ENCODE measurements at regions of chr6 and their contacts with region 1.

Region 1: DNA sequence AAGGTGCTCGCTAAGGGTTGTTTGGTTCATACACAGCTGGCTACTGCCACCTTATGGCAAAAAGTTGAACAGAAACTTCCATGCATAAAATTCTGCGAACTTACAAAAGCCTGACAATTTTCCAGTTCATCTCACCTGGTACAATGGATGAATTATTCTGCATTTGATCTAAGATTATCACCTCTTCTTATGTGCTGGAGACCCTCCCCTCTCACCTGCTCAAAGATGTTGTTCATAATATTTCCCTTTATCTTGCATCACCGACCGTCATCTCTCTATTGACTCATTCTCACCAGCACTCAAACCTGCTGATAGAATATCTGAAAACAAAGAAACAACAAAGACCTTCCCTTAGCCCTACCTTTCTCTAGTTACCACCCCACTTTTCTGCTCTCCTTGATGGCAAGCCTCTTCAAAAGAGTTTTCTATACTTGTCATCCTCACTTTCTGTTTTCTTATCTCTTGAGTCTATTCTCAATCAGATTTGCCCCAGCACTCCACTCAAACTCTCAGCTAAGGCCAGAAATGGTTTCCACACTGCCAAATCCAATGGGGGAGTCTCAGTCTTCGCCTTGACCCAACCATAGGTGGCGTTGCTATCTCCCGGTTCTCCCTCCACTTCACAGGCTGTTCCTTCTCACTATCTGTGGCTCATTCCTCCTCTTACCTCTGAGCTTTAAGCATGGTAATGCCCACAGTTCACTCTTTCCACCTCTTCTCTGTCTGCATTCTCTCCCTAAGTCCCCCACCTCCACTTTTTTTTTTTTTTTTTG is 25.8 kb downstream of the SNRNP48 start:
- DNase-seq: no peak
- ATAC-seq: peak; percentile 40 to 55
- H3K4me3 ChIP-seq: no peak overlapping the region
- H3K27ac ChIP-seq: no peak overlapping the region
- H3K4me1 ChIP-seq: no peaks in the 10 kb centered on the region
- H3K27me3 ChIP-seq: no peaks in the 10 kb centered on the region

Region 2: GRCh38 chr6:6676910-6677441 is 938.8 kb before region 1 on chr6:
- intact Hi-C with region 1: loop called in 1 of 4 experiments (anchors 10 kb)
- DNase-seq: peak; percentile 65 to 85 (median 76)
- ATAC-seq: peak; percentile 76 to 90
- H3K4me3 ChIP-seq: no peak overlapping the region
- H3K27ac ChIP-seq: peak overlapping the region; percentile 90
- H3K4me1 ChIP-seq: peaks cover 3% of the 10 kb centered on the region
- H3K27me3 ChIP-seq: no peaks in the 10 kb centered on the region

Region 3: DNA sequence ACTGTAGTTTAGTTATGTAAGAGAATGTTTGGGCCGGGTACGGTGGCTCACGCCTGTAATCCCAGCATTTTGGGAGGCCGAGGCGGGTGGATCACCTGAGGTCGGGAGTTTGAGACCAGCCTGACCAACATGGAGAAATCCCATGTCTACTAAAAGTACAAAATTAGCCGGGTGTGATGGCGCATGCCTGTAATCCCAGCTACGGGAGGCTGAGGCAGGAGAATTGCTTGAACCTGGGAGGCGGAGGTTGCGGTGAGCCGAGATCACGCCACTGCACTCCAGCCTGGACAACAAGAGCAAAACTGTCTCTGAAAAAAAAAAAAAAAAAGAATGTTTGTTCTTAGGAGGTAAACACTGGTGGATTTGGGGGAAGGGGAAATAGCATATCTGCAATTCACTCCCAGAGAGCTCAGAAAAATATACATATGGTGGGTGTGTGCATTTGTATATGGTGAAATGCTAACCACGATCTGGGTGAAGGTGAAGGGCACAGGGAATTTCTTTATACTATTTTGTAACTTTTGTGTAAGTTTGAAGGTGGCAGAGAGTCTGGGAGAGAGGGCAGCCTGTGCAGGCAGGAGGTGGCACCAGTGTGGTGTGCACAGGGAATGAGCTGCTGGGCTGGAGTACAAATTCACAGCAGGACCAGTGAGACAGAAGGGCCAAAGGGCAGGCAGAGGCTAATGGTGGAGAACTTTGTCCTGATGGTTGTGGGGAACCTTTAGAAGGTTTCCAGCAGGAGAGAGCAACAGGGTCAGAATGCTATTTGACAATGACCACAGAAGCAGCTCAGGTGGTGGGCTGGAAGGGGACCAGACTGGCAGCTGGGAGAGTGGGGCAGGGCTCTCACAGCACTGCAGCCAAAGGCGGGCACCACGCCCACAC is 345.2 kb before region 1 on chr6:
- intact Hi-C with region 1: loop called (anchors 5 to 10 kb)
- DNase-seq: no peak
- ATAC-seq: no peak
- H3K4me3 ChIP-seq: no peak overlapping the region
- H3K27ac ChIP-seq: no peak overlapping the region
- H3K4me1 ChIP-seq: no peaks in the 10 kb centered on the region
- H3K27me3 ChIP-seq: no peaks in the 10 kb centered on the region

Region 4: GRCh38 chr6:7276199-7276524 is 339.6 kb before region 1 on chr6:
- intact Hi-C with region 1: loop called (anchors 5 to 10 kb)
- DNase-seq: no peak
- ATAC-seq: no peak
- H3K4me3 ChIP-seq: no peak overlapping the region
- H3K27ac ChIP-seq: no peak overlapping the region
- H3K4me1 ChIP-seq: peaks cover 3% of the 10 kb centered on the region
- H3K27me3 ChIP-seq: no peaks in the 10 kb centered on the region

Region 5: GRCh38 chr6:7424967-7425807 is 190.6 kb before region 1 on chr6:
- intact Hi-C with region 1: loop called in 1 of 4 experiments (anchors 10 kb)
- DNase-seq: peak; percentile 50 to 81 (median 73)
- ATAC-seq: peak; percentile 84 to 88
- H3K4me3 ChIP-seq: no peak overlapping the region
- H3K27ac ChIP-seq: peak overlapping the region; percentile 58
- H3K4me1 ChIP-seq: no peaks in the 10 kb centered on the region
- H3K27me3 ChIP-seq: no peaks in the 10 kb centered on the region